Endothelial cell of umbilical vein (primary cell): ENCODE measurements at regions of chr11 and their contacts with region 1.

Region 1: DNA sequence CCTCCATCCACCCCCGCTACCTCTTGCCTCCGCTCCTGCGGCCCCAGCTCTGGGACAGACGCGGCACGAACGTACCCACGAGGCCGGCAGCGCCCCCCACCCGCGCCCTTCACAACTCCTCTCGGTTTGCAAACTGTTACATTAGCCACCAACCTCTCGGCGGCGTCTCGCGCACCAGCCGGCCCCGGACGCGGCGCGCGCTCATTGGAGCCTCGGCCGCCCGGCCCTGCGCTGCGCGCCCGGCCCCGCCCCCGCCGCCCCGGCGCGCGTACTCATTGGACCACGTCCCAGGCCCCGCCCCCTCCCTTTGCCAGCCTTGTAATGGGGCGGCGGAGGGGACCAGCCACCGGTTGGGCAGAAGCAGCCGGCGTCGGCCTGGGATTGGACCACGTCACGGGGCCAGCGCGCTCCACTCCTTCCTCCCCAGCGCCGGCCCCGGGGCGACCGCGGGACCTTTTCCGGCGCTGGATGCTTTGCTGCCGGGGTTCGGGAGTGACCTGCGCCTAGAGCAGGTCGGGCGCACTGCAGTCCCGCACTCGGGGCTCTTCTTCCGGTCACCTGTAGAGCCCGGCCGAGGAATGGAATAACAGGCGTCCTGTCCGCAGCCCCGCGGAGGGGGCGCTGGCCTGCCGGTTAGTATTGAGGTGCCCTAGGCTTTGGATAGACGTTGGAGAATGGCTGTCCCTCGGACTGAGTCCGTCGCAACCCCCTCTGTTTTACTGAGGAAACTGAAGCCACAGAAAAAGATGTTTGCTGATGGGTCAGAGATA is at the start of gene HYOU1:
- DNase-seq: peak; percentile 96
- H3K4me3 ChIP-seq: peak within 1 kb of the TSS; percentile 72 to 86 (median 80)
- H3K27ac ChIP-seq: peak within 1 kb of the TSS; percentile 54
- H3K4me1 ChIP-seq: peaks cover 11% of the 10 kb centered on the region
- H3K27me3 ChIP-seq: no peaks in the 10 kb centered on the region
- CTCF ChIP-seq: peak in 1 of 2 donors; percentile 35
- POLR2A ChIP-seq: peak; percentile 84
- total RNA-seq, gene HYOU1: 286 and 302 TPM in 2 replicates

Region 2: DNA sequence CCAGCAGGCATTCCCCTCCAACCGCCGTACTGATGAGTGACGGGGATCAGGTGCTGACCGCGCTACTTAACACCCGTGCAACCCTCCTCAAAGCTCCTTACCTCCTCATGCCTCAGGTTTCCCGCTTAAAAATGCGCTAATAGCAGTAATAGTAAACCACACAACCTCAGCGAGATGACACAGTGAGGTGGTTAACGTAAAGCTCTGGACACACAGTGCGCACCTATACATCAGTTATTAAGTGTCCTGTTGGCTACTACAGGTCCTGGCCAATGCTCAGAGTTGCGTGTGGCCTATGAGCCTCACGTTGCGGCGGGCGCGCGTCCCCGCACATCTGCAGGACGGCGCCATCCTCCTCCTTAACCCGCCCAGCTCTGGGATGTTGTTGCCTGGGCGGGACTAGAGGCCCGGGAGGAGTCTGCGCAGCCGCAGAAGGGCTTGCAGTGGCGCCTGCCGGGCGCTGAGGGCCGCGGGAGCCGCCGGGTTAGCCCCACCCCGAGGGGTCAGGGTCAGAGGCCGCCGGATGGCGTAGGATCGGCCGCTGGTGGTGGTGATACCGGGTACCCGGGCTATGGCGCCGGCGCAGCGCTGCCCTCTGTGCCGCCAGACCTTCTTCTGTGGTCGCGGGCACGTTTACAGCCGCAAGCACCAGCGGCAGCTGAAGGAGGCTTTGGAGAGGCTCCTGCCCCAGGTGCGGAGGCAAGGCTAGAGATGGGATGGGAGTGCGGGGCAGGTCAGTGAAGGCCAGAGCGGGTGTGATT is 59.4 kb before region 1 on chr11 and contains the start of gene CENATAC:
- CTCF ChIA-PET with region 1: no interaction called
- POLR2A ChIA-PET with region 1: no interaction called
- dilution Hi-C with region 1: no loop called
- intact Hi-C with region 1: loop called (anchors 5 kb)
- DNase-seq: peak; percentile 92
- H3K4me3 ChIP-seq: peak within 1 kb of the TSS; percentile 61 to 81 (median 62)
- H3K27ac ChIP-seq: peak within 1 kb of the TSS; percentile 26
- H3K4me1 ChIP-seq: peaks cover 18% of the 10 kb centered on the region
- H3K27me3 ChIP-seq: no peaks in the 10 kb centered on the region
- CTCF ChIP-seq: no peak
- POLR2A ChIP-seq: peak; percentile 93
- total RNA-seq, gene CENATAC: 39.0 and 41.8 TPM in 2 replicates

Region 3: DNA sequence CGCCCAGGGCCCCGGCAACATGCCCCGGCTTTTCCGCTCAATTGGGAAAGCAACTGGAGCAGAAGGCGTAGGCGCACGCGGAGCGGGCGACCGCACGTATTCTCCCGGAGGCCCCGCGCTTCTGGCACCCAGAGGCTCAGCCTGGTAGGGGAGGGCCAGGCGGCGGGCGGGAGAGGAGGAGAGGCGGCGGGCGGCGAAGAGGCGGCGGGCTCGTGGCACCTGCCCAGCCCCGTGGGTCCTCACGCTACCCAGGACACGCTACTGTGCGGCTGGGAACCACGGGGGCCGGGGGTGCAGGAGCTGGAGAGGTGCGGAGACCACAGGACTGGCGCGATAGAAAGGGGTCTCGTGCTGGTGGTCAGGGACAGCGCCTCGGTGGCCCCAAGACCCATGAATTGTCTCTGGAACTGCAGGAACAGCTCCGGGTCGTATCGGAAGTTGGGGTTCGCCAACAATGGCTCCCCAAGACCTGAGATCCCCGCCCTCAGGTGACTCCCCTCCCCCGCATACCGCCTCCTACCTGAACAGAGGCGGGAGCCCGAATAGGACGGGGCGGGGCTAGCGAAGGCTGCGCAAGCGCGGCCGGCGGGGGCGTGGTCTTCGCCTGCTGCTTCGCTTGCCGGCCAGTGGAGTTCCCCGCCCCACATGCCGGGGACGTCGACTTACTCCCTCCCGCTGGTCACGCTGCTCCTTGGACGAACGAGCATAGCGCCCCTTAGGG is 26.7 kb before region 1 on chr11 and contains the start of gene SLC37A4:
- CTCF ChIA-PET with region 1: interaction called, 3 read pairs
- POLR2A ChIA-PET with region 1: no interaction called
- dilution Hi-C with region 1: no loop called
- intact Hi-C with region 1: loop called (anchors 1 kb)
- DNase-seq: peak; percentile 98
- H3K4me3 ChIP-seq: peak within 1 kb of the TSS; percentile 55 to 86 (median 60)
- H3K27ac ChIP-seq: no peak within 1 kb of the TSS
- H3K4me1 ChIP-seq: peaks cover 5% of the 10 kb centered on the region
- H3K27me3 ChIP-seq: no peaks in the 10 kb centered on the region
- CTCF ChIP-seq: peak in 1 of 2 donors; percentile 93
- POLR2A ChIP-seq: peak; percentile 65
- total RNA-seq, gene SLC37A4: 19.9 and 21.5 TPM in 2 replicates

Region 4: GRCh38 chr11:119095066-119095880 is 38.1 kb after region 1 on chr11:
- CTCF ChIA-PET with region 1: interaction called, 3 read pairs
- POLR2A ChIA-PET with region 1: interaction called, 5 read pairs
- dilution Hi-C with region 1: no loop called
- intact Hi-C with region 1: loop called (anchors 1 kb)
- DNase-seq: peak; percentile 100
- H3K4me3 ChIP-seq: peak overlapping the region; percentile 70 to 95 (median 90)
- H3K27ac ChIP-seq: peak overlapping the region; percentile 59
- H3K4me1 ChIP-seq: peaks cover 27% of the 10 kb centered on the region
- H3K27me3 ChIP-seq: no peaks in the 10 kb centered on the region
- CTCF ChIP-seq: peak in 1 of 2 donors; percentile 1
- POLR2A ChIP-seq: peak; percentile 100